ENCODE measurements at regions of chr3 and their contacts with region 1.

Region 1: DNA sequence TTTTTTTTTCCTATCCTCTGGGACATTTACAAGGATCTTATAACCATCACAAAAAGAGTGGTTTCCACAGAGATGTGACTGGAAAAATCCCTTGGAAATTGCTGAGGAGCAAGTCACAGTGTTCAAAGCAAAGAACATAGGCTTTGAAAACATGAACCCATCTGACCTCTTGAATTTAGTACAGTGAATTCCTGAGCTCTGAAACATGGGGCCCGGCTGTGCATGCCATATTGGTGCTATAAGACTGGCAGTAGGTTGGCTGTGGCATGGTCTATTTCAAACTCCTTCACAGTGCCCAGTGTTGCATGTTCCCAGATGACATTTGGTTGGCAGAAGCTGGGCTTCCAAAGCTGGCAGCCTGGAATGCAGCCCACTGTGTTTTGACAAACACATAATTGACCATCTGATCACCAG is 202.2 kb downstream of the TIGIT start:
- DNase-seq: no peak
- ATAC-seq: no peak
- H3K4me3 ChIP-seq: no peak overlapping the region
- H3K27ac ChIP-seq: no peak overlapping the region
- H3K4me1 ChIP-seq: peaks cover 11% of the 10 kb centered on the region
- H3K27me3 ChIP-seq: no peaks in the 10 kb centered on the region
- CTCF ChIP-seq: no peak

Region 2: DNA sequence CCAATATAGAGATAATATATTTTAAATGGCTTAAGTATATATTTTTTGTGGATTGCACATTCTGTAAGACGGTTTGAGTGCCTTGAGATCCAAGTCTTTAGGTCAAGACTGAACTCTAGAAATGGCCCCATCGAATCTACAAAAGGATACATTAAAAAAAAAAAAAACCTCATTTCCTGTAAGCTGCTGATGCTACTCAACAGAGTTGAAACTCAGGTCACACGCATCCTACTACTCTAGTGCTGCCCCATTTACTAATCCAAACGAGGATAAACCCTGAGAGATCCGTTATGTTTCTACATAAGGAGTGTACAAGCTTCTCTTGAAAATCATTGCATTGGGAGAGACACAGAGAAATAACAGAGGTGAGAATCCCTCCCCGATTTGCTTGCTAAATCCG is 14.9 kb before region 1 on chr3:
- CTCF ChIA-PET with region 1: no interaction called
- POLR2A ChIA-PET with region 1: interaction called, 25 read pairs
- intact Hi-C with region 1: no loop called
- DNase-seq: no peak
- ATAC-seq: no peak
- H3K4me3 ChIP-seq: no peak overlapping the region
- H3K27ac ChIP-seq: no peak overlapping the region
- H3K4me1 ChIP-seq: no peaks in the 10 kb centered on the region
- H3K27me3 ChIP-seq: no peaks in the 10 kb centered on the region
- CTCF ChIP-seq: no peak

Region 3: DNA sequence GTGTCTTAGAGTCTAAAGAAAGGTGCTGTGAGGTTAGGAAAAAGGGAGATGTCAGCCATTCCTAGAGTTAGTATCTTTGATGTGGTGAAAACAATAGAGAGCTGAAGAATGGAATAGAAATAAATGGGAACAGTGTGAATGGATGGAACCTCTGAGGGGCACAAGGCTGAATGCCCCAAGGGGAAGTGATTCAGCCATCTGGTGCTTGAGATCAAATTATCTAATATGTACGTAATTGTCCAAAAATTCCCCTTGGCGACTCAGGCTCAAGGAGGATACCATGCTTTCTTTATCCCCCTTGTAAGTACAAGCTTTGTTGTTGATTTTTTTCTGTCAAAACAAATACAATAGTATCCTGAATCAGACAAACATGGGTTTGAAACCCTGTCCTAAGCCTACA is 1587.7 kb after region 1 on chr3:
- CTCF ChIA-PET with region 1: no interaction called
- POLR2A ChIA-PET with region 1: no interaction called
- intact Hi-C with region 1: no loop called
- DNase-seq: peak; percentile 9
- ATAC-seq: no peak
- H3K4me3 ChIP-seq: no peak overlapping the region
- H3K27ac ChIP-seq: no peak overlapping the region
- H3K4me1 ChIP-seq: no peaks in the 10 kb centered on the region
- H3K27me3 ChIP-seq: no peaks in the 10 kb centered on the region
- CTCF ChIP-seq: no peak